ENCODE measurements at regions of chr22 and their contacts with region 1.

Region 1: GRCh38 chr22:27919222-27919941 is at the start of gene PITPNB:
- DNase-seq: peak; percentile 98 to 100 (median 99)
- ATAC-seq: peak; percentile 86
- H3K4me3 ChIP-seq: peak within 1 kb of the TSS; percentile 79
- H3K4me3 Mint-ChIP-seq: peak within 1 kb of the TSS; percentile 100
- H3K27ac ChIP-seq: peak within 1 kb of the TSS; percentile 86 to 92
- H3K27ac Mint-ChIP-seq: peak within 1 kb of the TSS; percentile 99
- H3K4me1 ChIP-seq: peaks cover 19% of the 10 kb centered on the region
- H3K4me1 Mint-ChIP-seq: peaks cover 85% of the 10 kb centered on the region
- H3K27me3 ChIP-seq: no peaks in the 10 kb centered on the region
- H3K27me3 Mint-ChIP-seq: no peaks in the 10 kb centered on the region
- CTCF ChIP-seq: no peak
- total RNA-seq, gene PITPNB: 37.6 to 38.7 TPM

Region 2: DNA sequence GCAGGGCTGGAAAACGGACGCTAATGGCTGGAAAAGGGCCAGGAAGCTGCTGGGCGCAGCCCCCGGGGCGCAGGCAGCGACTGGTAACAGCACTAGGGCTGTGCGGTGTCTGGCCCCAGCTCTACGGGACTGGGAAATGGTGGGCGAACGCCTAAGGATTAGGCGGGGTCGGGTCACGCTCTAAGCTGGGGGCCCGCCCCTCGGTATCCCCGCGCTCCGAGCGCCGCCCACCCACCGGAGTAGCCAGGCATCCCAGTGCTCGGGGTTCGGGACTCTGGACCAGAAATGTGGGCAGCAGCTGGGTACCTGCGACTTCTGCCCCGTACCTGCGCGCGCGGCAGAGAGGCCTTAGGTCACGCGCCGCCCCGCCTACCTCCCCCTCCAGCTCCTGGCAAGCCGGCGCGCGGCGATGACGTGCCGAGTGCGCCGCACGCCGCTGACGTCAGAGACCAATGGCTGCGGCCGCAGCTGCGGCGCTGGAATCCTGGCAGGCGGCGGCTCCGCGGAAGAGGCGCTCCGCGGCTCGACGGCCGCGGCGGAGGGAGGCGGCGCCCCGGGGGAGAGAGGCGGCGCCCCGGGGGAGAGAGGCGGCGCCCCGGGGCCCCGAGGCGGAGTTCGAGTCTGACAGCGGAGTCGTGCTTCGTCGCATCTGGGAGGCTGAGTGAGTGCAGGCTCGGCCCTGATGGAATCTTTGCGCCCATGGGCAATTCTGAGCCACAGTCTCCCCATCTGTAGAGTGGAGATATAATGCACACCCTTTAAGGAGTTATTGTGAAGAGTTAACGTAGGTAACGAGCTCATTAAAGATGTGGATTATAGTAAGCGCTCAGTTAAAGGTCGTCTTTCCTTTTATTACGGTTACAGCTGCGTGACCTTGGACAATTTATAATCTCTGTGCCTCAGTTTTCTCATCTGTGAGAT is 1435.7 kb before region 1 on chr22 and contains the starts of genes HPS4 and SRRD:
- CTCF ChIA-PET with region 1: no interaction called
- POLR2A ChIA-PET with region 1: interaction called, 6 read pairs
- intact Hi-C with region 1: loop called in 1 of 2 experiments (anchors 5 kb)
- DNase-seq: peak; percentile 86 to 98 (median 91)
- ATAC-seq: peak; percentile 79
- H3K4me3 ChIP-seq: peak within 1 kb of the TSS; percentile 76
- H3K4me3 Mint-ChIP-seq: peak within 1 kb of the TSS; percentile 97
- H3K27ac ChIP-seq: peak within 1 kb of the TSS; percentile 86 to 92
- H3K27ac Mint-ChIP-seq: peak within 1 kb of the TSS; percentile 94
- H3K4me1 ChIP-seq: peaks cover 57% of the 10 kb centered on the region
- H3K4me1 Mint-ChIP-seq: peaks cover 73% of the 10 kb centered on the region
- H3K27me3 ChIP-seq: no peaks in the 10 kb centered on the region
- H3K27me3 Mint-ChIP-seq: no peaks in the 10 kb centered on the region
- CTCF ChIP-seq: no peak
- total RNA-seq, gene HPS4: 61.6 to 67.0 TPM
- total RNA-seq, gene SRRD: 25.8 to 27.2 TPM

Region 3: DNA sequence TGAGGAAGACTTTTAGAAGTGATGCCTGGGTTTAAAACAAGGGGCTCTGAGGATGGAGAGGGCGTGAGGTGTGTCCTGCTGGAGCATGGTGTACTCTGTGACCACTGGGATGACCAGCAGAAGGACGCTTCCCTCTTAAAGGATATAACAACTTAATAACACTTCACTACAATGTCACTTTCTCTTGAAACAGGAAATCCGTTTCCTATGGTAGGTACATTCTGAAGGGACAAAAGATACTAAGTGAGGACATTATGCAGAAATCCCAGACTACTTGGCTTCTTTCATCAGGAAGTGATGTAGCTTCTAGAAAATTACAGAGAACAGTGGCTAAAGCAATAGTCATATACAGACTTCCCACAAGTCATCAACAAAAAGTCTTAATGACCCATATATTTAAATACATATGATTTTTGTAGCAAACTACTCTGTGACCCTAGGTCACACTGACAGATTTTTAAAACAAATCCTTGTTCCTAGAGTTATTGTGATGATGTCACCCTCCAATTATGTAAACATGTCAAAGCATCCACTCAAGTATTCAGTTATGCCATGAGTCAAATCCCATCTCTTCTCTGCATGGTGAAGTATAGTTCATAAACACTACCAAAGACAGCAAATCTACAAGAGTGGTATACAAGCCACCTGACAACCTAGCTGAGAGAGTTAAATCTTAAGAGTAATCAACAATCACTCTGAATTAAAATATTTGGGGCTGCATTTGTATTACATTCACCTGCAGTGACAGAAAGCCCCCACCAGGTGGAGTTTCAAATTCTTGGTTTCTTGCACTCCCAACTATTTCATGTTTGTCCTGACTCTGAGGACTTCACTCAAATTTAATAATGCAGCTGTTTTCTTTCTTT is 33.2 kb before region 1 on chr22:
- CTCF ChIA-PET with region 1: interaction called, 3 read pairs
- POLR2A ChIA-PET with region 1: no interaction called
- intact Hi-C with region 1: loop called in 1 of 2 experiments (anchors 2 kb)
- DNase-seq: peak; percentile 13 to 65 (median 30)
- ATAC-seq: peak; percentile 55
- H3K4me3 ChIP-seq: no peak overlapping the region
- H3K4me3 Mint-ChIP-seq: no peak overlapping the region
- H3K27ac ChIP-seq: no peak overlapping the region
- H3K27ac Mint-ChIP-seq: peak overlapping the region; percentile 27
- H3K4me1 ChIP-seq: no peaks in the 10 kb centered on the region
- H3K4me1 Mint-ChIP-seq: peaks cover 21% of the 10 kb centered on the region
- H3K27me3 ChIP-seq: no peaks in the 10 kb centered on the region
- H3K27me3 Mint-ChIP-seq: no peaks in the 10 kb centered on the region
- CTCF ChIP-seq: peak; percentile 88

Region 4: DNA sequence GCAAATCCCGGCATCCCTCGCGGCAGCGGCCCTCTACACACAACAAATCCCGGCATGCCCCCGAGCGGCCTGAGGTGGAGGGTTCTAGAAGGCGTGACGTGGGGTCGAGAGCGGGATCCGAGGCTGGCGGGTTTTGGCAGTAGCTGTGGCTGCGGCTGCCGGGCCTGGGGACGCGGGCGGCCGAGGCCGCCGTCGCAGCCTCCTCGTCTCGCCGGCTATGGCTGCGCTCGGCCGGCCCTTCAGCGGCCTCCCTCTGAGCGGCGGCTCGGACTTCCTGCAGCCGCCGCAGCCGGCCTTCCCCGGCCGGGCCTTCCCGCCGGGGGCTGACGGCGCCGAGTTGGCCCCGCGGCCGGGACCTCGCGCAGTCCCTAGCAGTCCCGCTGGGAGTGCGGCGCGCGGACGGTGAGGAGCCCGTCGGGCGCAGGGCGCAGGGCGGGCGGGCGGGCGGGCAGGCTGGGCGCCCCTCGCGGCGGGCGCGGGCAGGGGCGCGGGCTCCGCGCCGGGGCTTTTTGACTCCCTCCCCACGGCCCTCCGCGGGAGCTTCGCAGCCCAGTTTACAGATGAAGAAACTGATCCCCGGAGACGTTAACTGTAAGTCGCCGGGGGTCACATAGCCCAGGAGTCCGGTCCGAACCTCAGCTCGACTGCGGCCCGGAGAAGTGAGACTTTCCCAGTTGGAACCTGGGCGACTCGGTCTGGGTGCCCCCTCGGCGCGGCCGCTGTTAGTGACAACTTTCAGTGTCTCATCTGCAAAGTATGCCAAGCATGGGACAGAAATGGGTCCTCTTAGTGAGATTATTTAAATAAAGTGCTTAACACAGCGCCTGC is 853.5 kb after region 1 on chr22 and contains the start of gene CCDC117:
- CTCF ChIA-PET with region 1: no interaction called
- POLR2A ChIA-PET with region 1: interaction called, 7 read pairs
- intact Hi-C with region 1: loop called in 1 of 2 experiments (anchors 10 kb)
- DNase-seq: peak; percentile 85 to 97 (median 91)
- ATAC-seq: peak; percentile 97
- H3K4me3 ChIP-seq: peak within 1 kb of the TSS; percentile 83
- H3K4me3 Mint-ChIP-seq: peak within 1 kb of the TSS; percentile 95
- H3K27ac ChIP-seq: peak within 1 kb of the TSS; percentile 61 to 73
- H3K27ac Mint-ChIP-seq: peak within 1 kb of the TSS; percentile 88
- H3K4me1 ChIP-seq: peaks cover 34% of the 10 kb centered on the region
- H3K4me1 Mint-ChIP-seq: peaks cover 27% of the 10 kb centered on the region
- H3K27me3 ChIP-seq: no peaks in the 10 kb centered on the region
- H3K27me3 Mint-ChIP-seq: no peaks in the 10 kb centered on the region
- CTCF ChIP-seq: no peak
- total RNA-seq, gene CCDC117: 14.2 to 16.1 TPM

Region 5: GRCh38 chr22:29072193-29072978 is 1153.0 kb after region 1 on chr22:
- CTCF ChIA-PET with region 1: no interaction called
- POLR2A ChIA-PET with region 1: no interaction called
- intact Hi-C with region 1: loop called in 1 of 2 experiments (anchors 2 kb)
- DNase-seq: peak; percentile 67 to 92 (median 76)
- ATAC-seq: peak; percentile 97
- H3K4me3 ChIP-seq: peak overlapping the region; percentile 49
- H3K4me3 Mint-ChIP-seq: peak overlapping the region; percentile 83
- H3K27ac ChIP-seq: no peak overlapping the region
- H3K27ac Mint-ChIP-seq: no peak overlapping the region
- H3K4me1 ChIP-seq: peaks cover 33% of the 10 kb centered on the region
- H3K4me1 Mint-ChIP-seq: peaks cover 28% of the 10 kb centered on the region
- H3K27me3 ChIP-seq: peaks cover 39 to 44% of the 10 kb centered on the region in 2 experiments
- H3K27me3 Mint-ChIP-seq: peaks cover 57% of the 10 kb centered on the region
- CTCF ChIP-seq: no peak

Measured in CD4-positive, alpha-beta T cell (primary cell).